Activated naive CD4-positive, alpha-beta T cell treated with anti-CD3 and anti-CD28 coated beads for 36 hours (primary cell): ENCODE measurements at regions of chr12 and their contacts with region 1.

Region 1: GRCh38 chr12:75505706-75506312 is 5.6 kb downstream of the KRR1 start:
- DNase-seq: no peak
- H3K4me3 Mint-ChIP-seq: no peak overlapping the region
- H3K27ac Mint-ChIP-seq: peak overlapping the region; percentile 31
- H3K4me1 Mint-ChIP-seq: peaks cover 29% of the 10 kb centered on the region
- H3K27me3 Mint-ChIP-seq: no peaks in the 10 kb centered on the region

Region 2: DNA sequence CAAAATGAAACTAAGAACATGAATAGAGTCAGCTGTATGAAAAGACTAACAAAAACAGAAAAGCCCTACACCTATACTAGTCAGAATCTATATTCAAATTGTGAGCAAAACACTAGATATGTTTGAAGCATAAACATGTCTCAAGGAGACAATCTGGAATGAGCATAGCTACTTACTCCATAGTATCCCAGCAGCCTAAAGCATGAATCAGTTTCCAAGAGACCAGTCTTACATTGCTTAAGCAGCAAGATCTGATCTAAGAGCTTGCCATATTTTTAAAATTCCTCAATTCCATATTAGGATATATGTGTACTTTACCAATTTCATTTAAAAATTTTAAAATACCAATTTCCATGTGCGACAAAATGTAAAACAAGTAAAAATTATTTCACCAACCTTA is 183.3 kb before region 1 on chr12:
- CTCF ChIA-PET with region 1: no interaction called
- intact Hi-C with region 1: no loop called
- DNase-seq: no peak
- H3K4me3 Mint-ChIP-seq: no peak overlapping the region
- H3K27ac Mint-ChIP-seq: no peak overlapping the region
- H3K4me1 Mint-ChIP-seq: no peaks in the 10 kb centered on the region
- H3K27me3 Mint-ChIP-seq: peaks cover 7% of the 10 kb centered on the region

Region 3: DNA sequence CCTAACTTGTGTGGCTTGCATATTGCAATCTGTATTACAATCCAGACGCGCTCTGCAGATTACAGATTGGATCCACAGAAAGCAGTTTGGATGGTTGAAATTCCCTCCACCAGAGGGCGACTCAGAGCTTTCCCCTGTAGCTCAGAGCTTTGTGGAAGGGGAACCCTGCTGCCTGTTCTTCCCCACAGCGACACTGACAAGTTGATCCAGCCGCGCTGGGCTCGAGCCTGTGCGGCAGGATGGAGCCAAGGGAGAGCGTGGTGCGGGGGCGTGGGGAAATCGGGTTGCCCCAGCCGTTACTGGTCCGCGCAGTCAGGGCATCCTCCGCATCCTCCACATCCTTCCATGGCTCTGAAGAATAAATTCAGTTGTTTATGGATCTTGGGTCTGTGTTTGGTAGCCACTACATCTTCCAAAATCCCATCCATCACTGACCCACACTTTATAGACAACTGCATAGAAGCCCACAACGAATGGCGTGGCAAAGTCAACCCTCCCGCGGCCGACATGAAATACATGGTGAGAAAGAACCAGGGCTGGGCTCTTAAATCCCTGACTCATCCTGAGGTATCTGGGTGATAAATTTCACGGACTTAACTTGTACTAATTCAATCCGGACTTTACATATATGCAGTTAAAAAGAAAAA is 171.3 kb before region 1 on chr12 and contains the start of gene GLIPR1L1:
- CTCF ChIA-PET with region 1: interaction called, 10 read pairs
- intact Hi-C with region 1: loop called (anchors 1 kb)
- DNase-seq: peak; percentile 92
- H3K4me3 Mint-ChIP-seq: peak within 1 kb of the TSS; percentile 44
- H3K27ac Mint-ChIP-seq: no peak within 1 kb of the TSS
- H3K4me1 Mint-ChIP-seq: peaks cover 18% of the 10 kb centered on the region
- H3K27me3 Mint-ChIP-seq: peaks cover 32% of the 10 kb centered on the region
- total RNA-seq, gene GLIPR1L1: not detected

Region 4: GRCh38 chr12:75437564-75437963 is 68.2 kb before region 1 on chr12:
- CTCF ChIA-PET with region 1: interaction called, 6 read pairs
- intact Hi-C with region 1: loop called (anchors 1 kb)
- DNase-seq: no peak
- H3K4me3 Mint-ChIP-seq: no peak overlapping the region
- H3K27ac Mint-ChIP-seq: no peak overlapping the region
- H3K4me1 Mint-ChIP-seq: peaks cover 2% of the 10 kb centered on the region
- H3K27me3 Mint-ChIP-seq: peaks cover 9% of the 10 kb centered on the region

Region 5: GRCh38 chr12:75489613-75490210 is 16.1 kb before region 1 on chr12:
- CTCF ChIA-PET with region 1: interaction called, 27 read pairs
- intact Hi-C with region 1: loop called (anchors 1 kb)
- DNase-seq: peak; percentile 62
- H3K4me3 Mint-ChIP-seq: no peak overlapping the region
- H3K27ac Mint-ChIP-seq: peak overlapping the region; percentile 25
- H3K4me1 Mint-ChIP-seq: peaks cover 19% of the 10 kb centered on the region
- H3K27me3 Mint-ChIP-seq: no peaks in the 10 kb centered on the region